ENCODE measurements at regions of chr1 and their contacts with region 1.

Region 1: GRCh38 chr1:203486618-203487370 is 7.2 kb upstream of the OPTC start:
- DNase-seq: no peak
- ATAC-seq: peak in 2 of 4 donors; percentile 5
- H3K4me3 ChIP-seq: peak overlapping the region in 1 of 4 donors; percentile 49
- H3K27ac ChIP-seq: peak overlapping the region in 2 of 4 donors; percentile 22 to 30
- H3K4me1 ChIP-seq: peaks cover 0 to 6% (median 5%) of the 10 kb centered on the region in 3 donors
- H3K27me3 ChIP-seq: no peaks in the 10 kb centered on the region
- CTCF ChIP-seq: no peak

Region 2: DNA sequence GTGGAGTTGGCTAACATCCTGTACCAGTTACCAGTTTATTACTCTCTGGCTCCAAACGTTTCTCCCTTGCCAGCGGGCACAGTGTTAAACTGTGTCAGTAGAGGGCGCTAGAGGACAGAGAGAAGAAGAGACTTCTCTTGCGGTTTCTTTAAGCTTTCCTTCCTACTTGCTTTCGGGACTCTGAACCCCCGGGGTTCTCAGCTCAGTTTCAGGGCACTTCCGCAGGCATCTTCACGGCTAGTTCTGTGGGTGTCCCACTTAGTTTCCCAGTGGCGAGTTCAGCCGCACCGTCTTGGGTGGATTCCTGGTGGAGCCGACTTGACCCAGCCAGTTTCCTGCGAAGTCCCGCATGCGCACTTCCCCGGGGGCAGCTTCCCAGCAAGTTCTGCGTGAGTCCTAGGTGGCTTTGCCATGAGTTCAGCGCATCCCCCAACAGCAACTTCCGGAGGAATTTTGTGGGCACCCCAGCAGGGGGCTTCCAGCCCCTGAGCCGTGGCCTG is 219.4 kb before region 1 on chr1:
- intact Hi-C with region 1: loop called in 2 of 3 experiments (anchors 5 kb)
- DNase-seq: peak; percentile 77 to 92 (median 84)
- ATAC-seq: peak; percentile 74 to 88 (median 86)
- H3K4me3 ChIP-seq: peak overlapping the region; percentile 24 to 43 (median 31)
- H3K27ac ChIP-seq: peak overlapping the region in 2 of 4 donors; percentile 43 to 61
- H3K4me1 ChIP-seq: no peaks in the 10 kb centered on the region
- H3K27me3 ChIP-seq: no peaks in the 10 kb centered on the region
- CTCF ChIP-seq: peak; percentile 83 to 90 (median 88)

Region 3: GRCh38 chr1:203625628-203626019 is 138.8 kb after region 1 on chr1:
- intact Hi-C with region 1: no loop called
- DNase-seq: peak in 3 of 6 donors; percentile 51 to 60 (median 59)
- ATAC-seq: peak; percentile 56 to 72 (median 70)
- H3K4me3 ChIP-seq: no peak overlapping the region
- H3K27ac ChIP-seq: peak overlapping the region in 2 of 4 donors; percentile 48 to 75
- H3K4me1 ChIP-seq: peaks cover 0 to 17% (median 10%) of the 10 kb centered on the region in 3 donors
- H3K27me3 ChIP-seq: no peaks in the 10 kb centered on the region
- CTCF ChIP-seq: peak in 2 of 4 donors; percentile 15 to 19

Region 4: GRCh38 chr1:203682473-203683383 is 195.9 kb after region 1 on chr1:
- intact Hi-C with region 1: no loop called
- DNase-seq: no peak
- ATAC-seq: peak in 1 of 4 donors; percentile 57
- H3K4me3 ChIP-seq: no peak overlapping the region
- H3K27ac ChIP-seq: no peak overlapping the region
- H3K4me1 ChIP-seq: peaks cover 0 to 6% (median 0%) of the 10 kb centered on the region in 3 donors
- H3K27me3 ChIP-seq: no peaks in the 10 kb centered on the region
- CTCF ChIP-seq: no peak

Measured in pancreas (tissue), 10 donors.